G401 (cell line): ENCODE measurements at regions of chr10 and their contacts with region 1.

Region 1: GRCh38 chr10:110279407-110279986 is 25.2 kb downstream of the SMNDC1 start:
- DNase-seq: peak; percentile 88

Region 2: GRCh38 chr10:110137142-110137545 is 142.4 kb before region 1 on chr10:
- in situ Hi-C with region 1: loop called (anchors 25 kb)
- DNase-seq: peak; percentile 84